ENCODE measurements at regions of chr10 and their contacts with region 1.

Region 1: DNA sequence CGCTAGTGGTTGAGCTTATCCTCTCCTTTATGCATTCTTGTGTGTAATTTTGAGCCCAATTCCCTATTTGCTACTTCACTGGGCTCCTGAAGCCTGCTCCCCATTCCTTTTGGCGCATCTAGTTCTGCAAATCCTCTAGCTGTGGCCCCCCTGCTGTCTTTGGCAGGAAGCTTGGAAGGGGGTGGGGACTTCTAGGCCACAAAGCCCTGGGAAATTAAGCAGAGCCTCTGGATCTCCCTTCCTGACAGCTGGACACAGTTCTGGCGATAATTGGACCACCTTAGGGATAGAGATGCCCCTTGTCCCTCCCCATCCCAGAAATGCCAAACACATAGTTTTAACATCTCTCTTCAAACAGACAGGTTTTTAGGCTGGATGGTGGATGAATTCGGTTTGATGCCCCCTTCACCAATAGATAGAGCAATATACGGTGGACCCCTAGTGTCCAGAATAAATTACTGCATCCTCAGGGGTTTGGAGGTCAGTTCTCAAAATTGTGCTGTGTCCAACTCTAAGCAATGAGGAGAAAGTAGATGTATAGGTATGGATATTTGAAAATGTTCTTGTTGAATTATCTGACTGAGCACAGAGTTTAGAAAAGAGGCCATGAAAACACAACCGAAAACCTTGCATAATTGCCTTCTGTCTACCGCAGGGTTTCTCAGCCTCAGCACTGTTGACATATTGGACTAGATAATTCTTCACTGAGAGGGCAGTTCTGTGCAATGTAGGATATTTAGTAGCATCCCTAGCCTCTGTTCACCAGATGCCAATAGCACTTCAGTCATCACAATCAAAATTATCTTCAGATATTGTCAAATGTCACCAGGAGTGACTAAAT is 75.5 kb downstream of the PAPSS2 start:
- DNase-seq: peak; percentile 18
- H3K4me3 ChIP-seq: no peak overlapping the region
- H3K27ac ChIP-seq: no peak overlapping the region
- H3K4me1 ChIP-seq: peaks cover 3% of the 10 kb centered on the region
- H3K27me3 ChIP-seq: no peaks in the 10 kb centered on the region
- CTCF ChIP-seq: peak; percentile 77 to 81

Region 2: DNA sequence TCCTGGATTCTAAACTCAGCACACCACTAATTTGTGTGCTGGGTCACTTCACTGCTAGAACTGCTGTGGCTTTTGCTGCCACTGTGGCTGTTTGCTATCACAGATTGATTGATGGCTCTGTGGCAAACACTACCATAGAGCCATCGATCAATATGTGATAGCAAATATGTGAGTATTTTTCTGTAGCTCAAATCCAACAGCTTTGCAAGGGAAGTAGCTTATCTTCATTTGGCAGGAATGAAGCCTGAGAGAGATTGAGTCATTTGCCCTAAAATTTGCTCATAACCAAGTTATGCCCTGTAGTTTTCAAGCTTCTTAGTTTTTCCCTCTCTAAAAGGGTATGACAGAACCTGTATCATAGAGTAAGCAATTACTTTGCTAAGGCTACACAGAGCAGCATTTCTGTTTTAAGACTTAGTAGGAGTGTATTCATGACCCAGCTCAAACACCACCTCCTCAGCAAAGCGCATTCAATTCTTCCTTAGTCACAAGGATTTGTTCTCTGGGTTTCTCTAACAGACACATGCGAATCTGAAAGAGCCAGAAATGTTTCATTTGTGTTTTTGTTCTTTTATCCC is 187.4 kb before region 1 on chr10:
- CTCF ChIA-PET with region 1: no interaction called
- dilution Hi-C with region 1: no loop called
- in situ Hi-C with region 1: loop called (anchors 25 kb)
- intact Hi-C with region 1: no loop called
- DNase-seq: peak; percentile 23
- H3K4me3 ChIP-seq: no peak overlapping the region
- H3K27ac ChIP-seq: no peak overlapping the region
- H3K4me1 ChIP-seq: no peaks in the 10 kb centered on the region
- H3K27me3 ChIP-seq: no peaks in the 10 kb centered on the region
- CTCF ChIP-seq: no peak

Region 3: DNA sequence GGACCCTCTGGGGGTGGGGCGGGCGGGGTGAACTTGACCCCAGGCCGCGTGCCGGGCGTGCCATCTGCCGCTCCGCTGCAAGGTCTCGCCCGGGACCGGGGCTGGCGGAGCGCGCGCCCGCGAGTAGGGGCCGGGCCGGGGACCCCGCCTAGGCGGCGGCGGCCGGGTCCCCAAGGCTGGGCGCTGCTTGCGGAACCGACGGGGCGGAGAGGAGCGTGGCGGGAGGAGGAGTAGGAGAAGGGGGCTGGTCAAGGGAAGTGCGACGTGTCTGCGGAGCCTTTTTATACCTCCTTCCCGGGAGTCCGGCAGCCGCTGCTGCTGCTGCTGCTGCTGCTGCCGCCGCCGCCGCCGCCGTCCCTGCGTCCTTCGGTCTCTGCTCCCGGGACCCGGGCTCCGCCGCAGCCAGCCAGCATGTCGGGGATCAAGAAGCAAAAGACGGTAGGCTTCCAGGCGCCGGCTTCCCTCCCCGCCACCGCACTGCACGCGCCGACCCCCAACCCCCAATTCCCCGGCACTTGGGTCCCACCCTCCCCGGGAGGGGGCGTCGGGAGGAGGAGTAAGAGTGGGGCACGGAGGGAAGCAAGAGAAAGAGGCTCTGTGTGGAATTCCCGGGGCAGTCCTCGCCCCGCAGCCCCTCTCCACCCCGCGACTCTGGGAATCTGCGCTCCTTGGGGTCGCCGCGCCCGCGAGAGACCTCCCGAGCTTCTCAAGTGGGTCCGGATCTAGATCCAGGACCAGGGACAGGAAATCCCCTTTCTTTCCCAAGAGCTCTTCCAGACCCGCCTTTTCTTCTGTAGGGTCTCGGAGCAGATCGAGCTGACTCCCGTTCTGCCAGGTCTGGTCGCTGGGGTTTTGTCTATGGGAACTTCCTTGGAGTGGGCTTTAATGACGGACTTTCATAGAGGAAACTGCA is 75.4 kb before region 1 on chr10 and contains the start of gene PAPSS2:
- CTCF ChIA-PET with region 1: no interaction called
- dilution Hi-C with region 1: no loop called
- in situ Hi-C with region 1: loop called (anchors 10 kb)
- intact Hi-C with region 1: loop called (anchors 1 kb)
- DNase-seq: peak; percentile 46
- H3K4me3 ChIP-seq: peak within 1 kb of the TSS; percentile 35 to 79 (median 68)
- H3K27ac ChIP-seq: no peak within 1 kb of the TSS
- H3K4me1 ChIP-seq: peaks cover 3% of the 10 kb centered on the region
- H3K27me3 ChIP-seq: no peaks in the 10 kb centered on the region
- CTCF ChIP-seq: no peak
- total RNA-seq, gene PAPSS2: 3.8 to 9.1 TPM

Region 4: GRCh38 chr10:87684001-87684638 is 51.1 kb before region 1 on chr10:
- CTCF ChIA-PET with region 1: no interaction called
- dilution Hi-C with region 1: loop called (anchors 5 kb)
- in situ Hi-C with region 1: no loop called
- intact Hi-C with region 1: no loop called
- DNase-seq: no peak
- H3K4me3 ChIP-seq: no peak overlapping the region
- H3K27ac ChIP-seq: no peak overlapping the region
- H3K4me1 ChIP-seq: no peaks in the 10 kb centered on the region
- H3K27me3 ChIP-seq: no peaks in the 10 kb centered on the region
- CTCF ChIP-seq: no peak

Region 5: GRCh38 chr10:87700031-87700796 is 35.0 kb before region 1 on chr10:
- CTCF ChIA-PET with region 1: no interaction called
- dilution Hi-C with region 1: no loop called
- in situ Hi-C with region 1: no loop called
- intact Hi-C with region 1: no loop called
- DNase-seq: peak; percentile 52
- H3K4me3 ChIP-seq: no peak overlapping the region
- H3K27ac ChIP-seq: no peak overlapping the region
- H3K4me1 ChIP-seq: no peaks in the 10 kb centered on the region
- H3K27me3 ChIP-seq: no peaks in the 10 kb centered on the region
- CTCF ChIP-seq: no peak

Region 6: GRCh38 chr10:88019753-88020152 is 284.5 kb after region 1 on chr10:
- CTCF ChIA-PET with region 1: no interaction called
- dilution Hi-C with region 1: no loop called
- in situ Hi-C with region 1: no loop called
- intact Hi-C with region 1: no loop called
- DNase-seq: no peak
- H3K4me3 ChIP-seq: no peak overlapping the region
- H3K27ac ChIP-seq: no peak overlapping the region
- H3K4me1 ChIP-seq: no peaks in the 10 kb centered on the region
- H3K27me3 ChIP-seq: no peaks in the 10 kb centered on the region
- CTCF ChIP-seq: no peak

Region 7: DNA sequence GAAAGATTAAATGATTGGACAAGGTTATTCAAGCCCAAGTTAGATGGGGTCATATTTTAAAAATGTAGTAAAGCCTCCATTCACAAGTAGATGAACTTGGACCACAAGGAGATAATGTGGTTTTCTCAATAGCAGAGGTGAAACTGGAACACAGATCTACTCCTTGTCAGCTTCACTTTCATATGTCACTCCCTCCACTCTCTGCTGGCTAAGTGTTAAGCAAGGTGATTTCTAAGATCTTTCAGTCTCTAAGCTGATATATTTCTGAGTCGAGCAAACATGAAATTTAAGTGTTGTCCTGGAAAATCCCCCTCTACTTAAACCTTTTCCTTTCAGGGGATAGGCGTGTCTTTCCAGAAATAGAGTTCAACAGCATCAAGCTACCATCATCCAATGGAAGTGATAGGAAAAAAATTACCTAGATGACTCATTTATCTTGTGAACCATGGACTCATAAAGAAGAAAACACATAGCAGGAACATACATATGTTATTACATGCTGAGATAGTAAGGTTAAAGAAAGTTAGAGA is 403.2 kb after region 1 on chr10:
- CTCF ChIA-PET with region 1: no interaction called
- dilution Hi-C with region 1: no loop called
- in situ Hi-C with region 1: no loop called
- intact Hi-C with region 1: no loop called
- DNase-seq: peak; percentile 55
- H3K4me3 ChIP-seq: no peak overlapping the region
- H3K27ac ChIP-seq: no peak overlapping the region
- H3K4me1 ChIP-seq: peaks cover 4% of the 10 kb centered on the region
- H3K27me3 ChIP-seq: no peaks in the 10 kb centered on the region
- CTCF ChIP-seq: no peak